ENCODE measurements at regions of chr16 and their contacts with region 1.

Region 1: DNA sequence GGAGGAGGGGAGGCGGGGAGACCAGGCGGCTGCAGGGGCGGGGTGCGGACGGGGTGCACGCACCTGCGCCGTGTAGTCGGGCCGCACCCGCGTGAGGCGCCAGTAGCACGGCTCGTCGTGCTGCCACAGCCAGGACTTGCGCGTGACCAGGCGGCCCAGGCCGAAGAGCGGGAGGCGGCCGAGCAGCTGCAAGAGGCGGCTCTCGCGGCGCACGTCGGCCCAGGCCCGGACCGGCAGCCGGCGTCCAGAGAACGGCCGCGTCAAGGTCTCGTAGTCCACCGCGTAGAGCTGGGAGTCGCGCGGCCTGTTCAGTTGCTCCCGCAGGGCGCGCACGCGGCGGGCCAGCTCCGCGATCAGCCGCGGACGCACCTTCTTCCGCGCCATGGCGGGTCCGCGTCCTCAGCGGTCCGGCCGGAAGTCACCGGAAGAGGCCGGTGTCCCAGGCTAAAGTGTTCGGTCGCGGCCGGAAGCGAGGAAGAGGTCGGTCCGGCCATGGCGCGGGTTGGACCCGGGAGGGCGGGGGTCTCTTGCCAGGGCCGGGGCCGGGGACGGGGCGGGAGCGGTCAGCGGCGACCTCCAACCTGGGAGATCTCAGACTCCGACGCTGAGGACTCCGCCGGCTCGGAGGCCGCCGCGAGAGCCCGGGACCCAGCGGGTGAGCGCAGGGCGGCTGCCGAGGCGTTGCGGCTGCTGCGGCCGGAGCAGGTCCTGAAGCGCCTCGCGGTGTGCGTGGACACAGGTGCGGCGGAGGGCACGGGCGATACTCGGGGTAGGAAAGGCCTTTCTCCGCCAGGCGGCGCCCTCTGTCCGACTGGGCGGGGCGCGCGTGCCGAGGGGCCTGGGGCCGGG is at the starts of genes EME2 and MRPS34:
- DNase-seq: peak; percentile 54 to 89 (median 78)
- ATAC-seq: peak; percentile 48
- H3K4me3 ChIP-seq: peak within 1 kb of the TSS; percentile 79 to 91
- H3K4me3 Mint-ChIP-seq: peak within 1 kb of the TSS; percentile 96
- H3K27ac ChIP-seq: peak within 1 kb of the TSS; percentile 57 to 66
- H3K27ac Mint-ChIP-seq: peak within 1 kb of the TSS; percentile 96
- H3K4me1 ChIP-seq: peaks cover 30% of the 10 kb centered on the region
- H3K4me1 Mint-ChIP-seq: peaks cover 19% of the 10 kb centered on the region
- H3K27me3 ChIP-seq: no peaks in the 10 kb centered on the region
- H3K27me3 Mint-ChIP-seq: no peaks in the 10 kb centered on the region
- CTCF ChIP-seq: peak; percentile 92
- total RNA-seq, gene EME2: 27.5 to 31.7 TPM
- total RNA-seq, gene MRPS34: 18.9 to 21.4 TPM

Region 2: GRCh38 chr16:667780-668518 is 1105.0 kb before region 1 on chr16 and contains the start of gene RHOT2:
- CTCF ChIA-PET with region 1: no interaction called
- POLR2A ChIA-PET with region 1: no interaction called
- intact Hi-C with region 1: no loop called
- DNase-seq: peak; percentile 83 to 96 (median 92)
- ATAC-seq: peak; percentile 92
- H3K4me3 ChIP-seq: peak within 1 kb of the TSS; percentile 62 to 85
- H3K4me3 Mint-ChIP-seq: peak within 1 kb of the TSS; percentile 79
- H3K27ac ChIP-seq: peak within 1 kb of the TSS; percentile 37 to 68
- H3K27ac Mint-ChIP-seq: peak within 1 kb of the TSS; percentile 84
- H3K4me1 ChIP-seq: peaks cover 22% of the 10 kb centered on the region
- H3K4me1 Mint-ChIP-seq: peaks cover 12% of the 10 kb centered on the region
- H3K27me3 ChIP-seq: no peaks in the 10 kb centered on the region
- H3K27me3 Mint-ChIP-seq: no peaks in the 10 kb centered on the region
- CTCF ChIP-seq: peak; percentile 65
- total RNA-seq, gene RHOT2: 163 to 175 TPM

Region 3: DNA sequence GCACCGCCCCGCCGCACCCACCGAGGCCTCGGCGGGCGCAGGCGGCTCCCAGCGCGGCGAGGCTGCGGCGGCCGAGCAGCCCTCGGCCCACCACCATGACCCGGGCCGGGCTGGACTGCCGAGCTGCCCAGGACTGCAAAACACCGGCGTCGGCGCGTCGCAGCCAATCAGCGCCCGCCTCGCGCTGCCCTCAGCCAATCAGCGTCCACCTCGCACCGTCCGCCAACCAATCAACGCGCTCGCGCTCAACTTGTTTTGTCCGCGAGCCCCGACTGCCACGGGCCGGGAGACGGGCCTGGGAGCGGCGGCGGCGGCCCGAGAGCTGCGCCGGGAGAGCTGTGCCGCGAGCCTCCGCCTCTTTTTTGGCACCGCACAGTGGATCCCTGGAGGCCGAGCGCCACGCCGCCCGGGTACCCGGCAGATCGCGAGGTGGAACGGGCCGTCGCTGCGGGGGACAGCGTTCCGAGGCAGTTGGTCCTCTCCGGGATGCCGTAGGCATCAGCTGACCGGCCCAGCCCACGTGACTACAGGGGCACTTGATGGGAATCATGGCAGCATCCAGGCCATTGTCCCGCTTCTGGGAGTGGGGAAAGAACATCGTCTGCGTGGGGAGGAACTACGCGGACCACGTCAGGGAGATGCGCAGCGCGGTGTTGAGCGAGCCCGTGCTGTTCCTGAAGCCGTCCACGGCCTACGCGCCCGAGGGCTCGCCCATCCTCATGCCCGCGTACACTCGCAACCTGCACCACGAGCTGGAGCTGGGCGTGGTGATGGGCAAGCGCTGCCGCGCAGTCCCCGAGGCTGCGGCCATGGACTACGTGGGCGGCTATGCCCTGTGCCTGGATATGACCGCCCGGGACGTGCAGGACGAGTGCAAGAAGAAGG is 54.0 kb after region 1 on chr16 and contains the starts of genes FAHD1 and HAGH:
- CTCF ChIA-PET with region 1: no interaction called
- POLR2A ChIA-PET with region 1: no interaction called
- intact Hi-C with region 1: loop called in 1 of 2 experiments (anchors 2 kb)
- DNase-seq: peak; percentile 83 to 96 (median 89)
- ATAC-seq: peak; percentile 79
- H3K4me3 ChIP-seq: peak within 1 kb of the TSS; percentile 72 to 91
- H3K4me3 Mint-ChIP-seq: peak within 1 kb of the TSS; percentile 90
- H3K27ac ChIP-seq: peak within 1 kb of the TSS; percentile 73 to 78
- H3K27ac Mint-ChIP-seq: peak within 1 kb of the TSS; percentile 95
- H3K4me1 ChIP-seq: peaks cover 46% of the 10 kb centered on the region
- H3K4me1 Mint-ChIP-seq: peaks cover 48% of the 10 kb centered on the region
- H3K27me3 ChIP-seq: no peaks in the 10 kb centered on the region
- H3K27me3 Mint-ChIP-seq: no peaks in the 10 kb centered on the region
- CTCF ChIP-seq: no peak
- total RNA-seq, gene FAHD1: 11.7 to 13.7 TPM
- total RNA-seq, gene HAGH: 32.5 to 41.1 TPM

Region 4: DNA sequence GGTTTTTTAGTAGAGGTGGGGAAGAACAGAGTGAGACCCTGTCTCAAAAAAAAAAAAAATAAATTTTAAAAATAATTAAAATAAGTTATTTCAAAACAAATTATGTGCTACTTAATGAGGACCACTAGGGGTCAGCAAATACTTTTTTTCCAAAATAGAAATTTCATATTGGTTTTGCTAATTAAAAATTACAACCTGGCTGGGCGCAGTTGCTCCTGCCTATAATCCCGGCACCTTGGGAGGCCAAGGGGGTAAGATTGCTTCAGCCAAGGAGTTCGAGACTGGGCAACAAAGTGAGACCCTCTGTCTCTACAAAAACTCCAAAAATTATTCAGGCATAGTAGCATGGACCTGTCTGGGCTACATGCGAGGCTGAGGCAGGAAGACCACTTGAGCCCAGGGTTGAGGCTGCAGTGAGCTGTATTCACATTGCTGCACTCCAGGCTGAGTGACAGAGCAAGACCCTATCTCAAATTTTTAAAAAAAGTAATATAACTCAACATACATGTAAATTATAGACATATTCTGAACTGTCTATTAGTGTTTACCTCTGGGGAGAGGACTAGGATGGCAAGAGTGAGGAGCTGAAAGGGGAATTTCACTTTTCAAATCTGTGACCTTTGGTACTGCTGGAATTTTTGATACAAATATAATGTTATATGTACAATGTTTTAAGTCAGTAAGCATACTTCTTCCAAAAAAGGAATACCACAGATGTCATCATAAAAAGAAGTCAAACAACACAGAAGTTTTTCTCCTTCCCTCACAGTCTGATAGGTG is 90.9 kb after region 1 on chr16:
- CTCF ChIA-PET with region 1: no interaction called
- POLR2A ChIA-PET with region 1: no interaction called
- intact Hi-C with region 1: loop called in 1 of 2 experiments (anchors 5 kb)
- DNase-seq: peak in 2 of 9 experiments; percentile 51 to 70
- ATAC-seq: peak; percentile 34
- H3K4me3 ChIP-seq: no peak overlapping the region
- H3K4me3 Mint-ChIP-seq: no peak overlapping the region
- H3K27ac ChIP-seq: no peak overlapping the region
- H3K27ac Mint-ChIP-seq: no peak overlapping the region
- H3K4me1 ChIP-seq: no peaks in the 10 kb centered on the region
- H3K4me1 Mint-ChIP-seq: no peaks in the 10 kb centered on the region
- H3K27me3 ChIP-seq: peaks cover 2 to 8% of the 10 kb centered on the region in 2 experiments
- H3K27me3 Mint-ChIP-seq: peaks cover 11% of the 10 kb centered on the region
- CTCF ChIP-seq: peak; percentile 81